OCI-LY7 (cell line): ENCODE measurements at regions of chr11 and their contacts with region 1.

Region 1: DNA sequence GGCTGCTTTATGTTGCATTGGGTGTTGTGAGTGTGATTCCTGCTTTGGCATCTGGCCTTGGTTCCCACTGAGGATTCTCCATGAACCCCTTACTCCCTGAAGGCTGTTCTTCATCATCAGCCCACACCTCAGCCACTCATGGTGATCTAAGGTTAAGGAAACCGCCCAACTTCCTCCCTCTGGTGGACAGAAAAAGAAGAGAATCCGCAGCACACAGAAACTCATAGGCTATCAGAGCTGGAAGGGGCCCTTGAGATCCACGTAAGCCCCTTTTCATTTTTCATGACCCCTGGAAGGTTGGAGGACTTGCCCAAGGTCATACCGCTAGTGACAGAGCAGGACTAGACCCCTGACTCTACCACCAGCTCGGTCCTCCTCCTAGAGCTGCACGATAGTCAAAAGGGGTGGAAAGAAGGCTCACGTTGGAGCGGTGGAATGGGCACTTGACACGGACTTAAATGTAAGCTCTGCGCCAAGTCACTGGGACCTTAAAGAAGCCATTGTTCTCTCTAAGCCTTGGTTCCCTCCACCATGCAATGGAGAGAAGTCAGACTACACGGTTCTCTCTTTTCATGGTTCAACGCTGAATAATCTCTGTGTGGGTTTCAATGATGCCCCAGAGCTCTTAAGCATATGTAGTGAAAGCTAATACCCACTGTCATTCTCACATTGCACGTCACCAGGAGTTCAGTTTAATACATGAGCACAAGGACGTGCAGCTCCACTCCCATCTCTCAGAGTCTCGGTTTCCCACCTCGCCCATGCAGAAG is 83.6 kb upstream of the CRTAM start:
- DNase-seq: peak; percentile 82
- H3K4me3 ChIP-seq: no peak overlapping the region
- H3K27ac ChIP-seq: peak overlapping the region; percentile 70
- H3K4me1 ChIP-seq: peaks cover 71% of the 10 kb centered on the region
- CTCF ChIP-seq: peak; percentile 88

Region 2: DNA sequence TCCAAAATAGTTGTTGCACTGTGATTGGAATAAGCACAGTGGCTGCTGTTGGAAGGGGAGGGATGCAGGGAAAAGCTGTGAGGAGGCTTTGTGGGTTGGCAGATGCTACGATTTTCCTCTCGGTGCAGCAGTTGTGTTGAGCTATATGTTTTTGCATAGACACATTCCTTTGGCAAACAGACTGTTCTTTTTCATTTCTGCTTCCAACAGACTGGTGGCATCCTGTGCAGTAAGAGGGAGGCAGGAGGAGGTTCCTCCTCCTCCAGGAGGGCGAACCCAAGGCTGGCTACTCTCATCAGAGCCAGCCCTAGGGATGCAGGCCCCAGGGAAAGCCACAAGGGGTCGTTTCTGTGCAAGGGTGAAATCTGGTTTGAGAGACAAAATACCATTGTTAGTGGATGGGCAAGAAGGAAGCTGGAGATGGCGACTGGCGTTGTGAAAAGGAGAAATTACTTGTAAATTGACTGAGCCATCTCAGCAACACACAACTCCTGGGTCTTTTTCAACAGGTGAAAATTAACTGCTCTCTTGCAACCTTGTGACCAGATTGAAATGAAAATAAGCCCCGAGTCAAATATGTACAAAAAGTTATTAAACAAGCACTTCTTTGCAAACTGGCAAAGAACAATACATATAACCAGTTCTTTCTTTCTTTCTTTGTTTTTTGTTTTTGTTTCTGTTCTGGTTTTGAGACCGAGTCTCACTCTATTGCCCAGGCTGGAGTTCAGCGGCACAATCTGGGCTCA is 125.8 kb before region 1 on chr11:
- CTCF ChIA-PET with region 1: interaction called, 32 read pairs
- POLR2A ChIA-PET with region 1: interaction called, 29 read pairs
- intact Hi-C with region 1: loop called (anchors 1 kb)
- DNase-seq: peak; percentile 85
- H3K4me3 ChIP-seq: no peak overlapping the region
- H3K27ac ChIP-seq: no peak overlapping the region
- H3K4me1 ChIP-seq: peaks cover 10% of the 10 kb centered on the region
- CTCF ChIP-seq: peak; percentile 94

Region 3: GRCh38 chr11:122655527-122656072 is 99.1 kb before region 1 on chr11 and contains the start of gene UBASH3B:
- CTCF ChIA-PET with region 1: interaction called, 30 read pairs
- POLR2A ChIA-PET with region 1: interaction called, 33 read pairs
- intact Hi-C with region 1: loop called (anchors 1 kb)
- DNase-seq: peak; percentile 80
- H3K4me3 ChIP-seq: peak within 1 kb of the TSS; percentile 77
- H3K27ac ChIP-seq: peak within 1 kb of the TSS; percentile 43
- H3K4me1 ChIP-seq: peaks cover 46% of the 10 kb centered on the region
- CTCF ChIP-seq: no peak; the same call in 1 of the 2 replicates
- total RNA-seq, gene UBASH3B: 36.3 and 54.7 TPM in 2 replicates

Region 4: GRCh38 chr11:122673701-122674100 is 81.0 kb before region 1 on chr11:
- CTCF ChIA-PET with region 1: interaction called, 9 read pairs
- POLR2A ChIA-PET with region 1: interaction called, 56 read pairs
- intact Hi-C with region 1: loop called (anchors 1 kb)
- DNase-seq: no peak
- H3K4me3 ChIP-seq: no peak overlapping the region
- H3K27ac ChIP-seq: peak overlapping the region; percentile 26
- H3K4me1 ChIP-seq: peaks cover 76% of the 10 kb centered on the region
- CTCF ChIP-seq: no peak

Region 5: GRCh38 chr11:122717264-122717867 is 37.4 kb before region 1 on chr11:
- CTCF ChIA-PET with region 1: interaction called, 9 read pairs
- POLR2A ChIA-PET with region 1: interaction called, 13 read pairs
- intact Hi-C with region 1: loop called (anchors 1 kb)
- DNase-seq: peak; percentile 90
- H3K4me3 ChIP-seq: peak overlapping the region; percentile 47
- H3K27ac ChIP-seq: peak overlapping the region; percentile 92
- H3K4me1 ChIP-seq: peaks cover 95% of the 10 kb centered on the region
- CTCF ChIP-seq: no peak

Region 6: GRCh38 chr11:122781378-122782195 is 26.8 kb after region 1 on chr11:
- CTCF ChIA-PET with region 1: interaction called, 7 read pairs
- POLR2A ChIA-PET with region 1: interaction called, 4 read pairs
- intact Hi-C with region 1: loop called (anchors 1 kb)
- DNase-seq: peak; percentile 78
- H3K4me3 ChIP-seq: no peak overlapping the region
- H3K27ac ChIP-seq: no peak overlapping the region
- H3K4me1 ChIP-seq: no peaks in the 10 kb centered on the region
- CTCF ChIP-seq: peak; percentile 96

Region 7: DNA sequence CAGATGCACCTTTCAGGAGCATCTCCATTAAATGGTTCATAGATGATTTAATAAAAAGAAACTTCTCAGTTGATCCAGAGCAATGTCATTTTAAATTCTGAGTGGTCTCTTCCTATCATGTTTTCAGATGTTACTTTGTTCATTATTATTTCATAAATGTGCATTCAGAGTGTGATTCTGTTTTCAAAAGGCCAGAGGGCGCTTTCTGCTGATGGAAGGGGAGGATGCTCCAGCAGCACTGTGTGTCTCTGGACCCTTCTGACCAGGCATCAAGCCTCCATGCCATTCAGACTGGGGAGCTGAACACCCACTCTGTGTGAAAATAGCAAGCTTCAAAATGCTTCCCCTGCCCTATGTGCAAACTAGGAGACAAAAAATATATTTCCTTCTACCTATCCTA is 59.7 kb after region 1 on chr11:
- CTCF ChIA-PET with region 1: no interaction called
- POLR2A ChIA-PET with region 1: no interaction called
- intact Hi-C with region 1: no loop called
- DNase-seq: no peak
- H3K4me3 ChIP-seq: no peak overlapping the region
- H3K27ac ChIP-seq: no peak overlapping the region
- H3K4me1 ChIP-seq: no peaks in the 10 kb centered on the region
- CTCF ChIP-seq: peak; percentile 57

Region 8: DNA sequence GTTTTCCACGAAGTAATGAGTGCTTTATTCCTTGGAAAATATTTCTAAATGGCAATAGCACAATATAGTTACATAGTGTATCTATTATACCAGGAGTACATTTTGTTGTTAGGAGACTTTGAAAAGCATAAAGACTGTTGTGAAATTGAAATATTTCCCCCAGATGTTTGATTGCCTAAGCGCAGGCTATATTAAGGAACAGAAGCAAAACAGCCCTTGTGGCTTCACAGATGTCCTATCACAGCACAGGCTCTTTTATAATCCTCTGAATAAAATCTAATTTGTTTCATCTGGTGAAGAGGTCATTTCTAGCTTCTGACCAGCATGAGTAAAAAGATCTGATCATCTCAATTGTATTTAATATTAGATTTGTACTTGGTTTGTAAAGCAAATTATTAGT is 178.7 kb after region 1 on chr11:
- CTCF ChIA-PET with region 1: no interaction called
- POLR2A ChIA-PET with region 1: no interaction called
- intact Hi-C with region 1: no loop called
- DNase-seq: no peak
- H3K4me3 ChIP-seq: no peak overlapping the region
- H3K27ac ChIP-seq: no peak overlapping the region
- H3K4me1 ChIP-seq: no peaks in the 10 kb centered on the region
- CTCF ChIP-seq: no peak

Region 9: GRCh38 chr11:123261345-123262106 is 506.8 kb after region 1 on chr11:
- CTCF ChIA-PET with region 1: interaction called, 3 read pairs
- POLR2A ChIA-PET with region 1: no interaction called
- intact Hi-C with region 1: loop called (anchors 10 kb)
- DNase-seq: peak; percentile 80
- H3K4me3 ChIP-seq: no peak overlapping the region
- H3K27ac ChIP-seq: peak overlapping the region; percentile 43
- H3K4me1 ChIP-seq: peaks cover 64% of the 10 kb centered on the region
- CTCF ChIP-seq: peak; percentile 98